ENCODE measurements at regions of chr3 and their contacts with region 1.

Region 1: DNA sequence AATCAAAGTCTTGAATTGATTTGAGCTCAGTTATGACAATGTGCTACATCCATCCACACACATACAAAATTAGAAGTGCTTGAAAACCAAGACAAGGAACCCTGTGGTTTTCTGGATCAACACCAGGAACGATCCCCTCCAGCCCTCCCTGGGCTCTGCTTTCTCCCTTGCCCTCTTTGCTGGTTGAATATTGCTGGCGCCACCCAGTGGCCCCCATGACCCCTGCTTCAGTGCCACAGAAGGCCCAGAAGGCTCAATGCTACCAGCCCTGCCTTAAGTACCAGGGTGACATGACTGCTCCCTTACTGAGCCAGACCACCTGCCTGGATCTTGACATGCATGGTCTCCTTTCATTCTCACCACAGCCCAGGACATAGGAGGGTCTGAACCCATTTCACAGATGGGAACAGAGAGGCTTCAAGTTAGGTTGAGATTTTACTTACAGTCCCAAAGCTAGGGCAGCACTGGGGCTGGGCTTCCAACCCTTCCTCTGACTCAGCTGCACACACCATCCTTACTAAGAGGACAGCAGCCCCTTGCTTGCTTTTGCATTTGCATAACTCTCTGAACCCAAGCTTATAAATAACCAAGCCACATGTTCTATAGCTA is 15.0 kb downstream of the IL12A start:
- DNase-seq: peak; percentile 48
- ATAC-seq: peak; percentile 93
- H3K4me3 ChIP-seq: no peak overlapping the region
- H3K27ac ChIP-seq: no peak overlapping the region
- H3K4me1 ChIP-seq: peaks cover 0 to 3% of the 10 kb centered on the region in 2 experiments; a peak in 2 of 4 replicates
- H3K27me3 ChIP-seq: no peaks in the 10 kb centered on the region
- CTCF ChIP-seq: peak; percentile 68 to 76 (median 73); a peak in 5 of 6 replicates
- POLR2A ChIP-seq: no peak
- RAD21 ChIP-seq: peak; percentile 78

Region 2: DNA sequence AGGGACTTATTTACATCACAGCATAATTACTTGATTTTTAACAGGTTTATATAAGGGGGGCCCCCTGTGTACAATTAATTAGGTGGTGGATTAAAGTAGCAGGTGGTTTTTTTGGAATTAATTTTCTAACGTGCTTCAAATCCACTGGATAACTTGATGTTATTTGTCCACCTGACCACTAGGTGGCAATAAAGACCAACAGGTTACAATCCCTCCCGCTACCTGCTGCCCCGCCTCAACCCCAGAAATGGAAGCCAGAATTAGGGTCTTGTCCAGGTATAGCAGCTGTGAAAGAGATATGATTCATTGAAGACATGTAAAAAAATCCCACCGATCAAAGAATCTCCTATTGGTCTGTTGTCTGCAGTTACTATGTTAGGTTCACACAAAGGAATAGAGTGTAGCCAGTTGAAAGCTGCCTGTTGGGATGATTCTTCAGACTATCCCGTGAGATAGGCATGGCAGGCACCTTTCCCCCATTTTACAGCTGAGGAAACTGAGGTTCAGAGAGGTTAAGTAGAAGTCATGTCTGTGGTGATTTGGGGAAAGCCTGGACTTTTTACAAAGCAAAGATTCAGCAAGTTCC is 1157.8 kb before region 1 on chr3:
- CTCF ChIA-PET with region 1: no interaction called
- POLR2A ChIA-PET with region 1: no interaction called
- RAD21 ChIA-PET with region 1: no interaction called
- intact Hi-C with region 1: loop called (anchors 10 kb)
- DNase-seq: peak; percentile 27
- ATAC-seq: peak; percentile 85
- H3K4me3 ChIP-seq: no peak overlapping the region
- H3K27ac ChIP-seq: no peak overlapping the region
- H3K4me1 ChIP-seq: no peaks in the 10 kb centered on the region
- H3K27me3 ChIP-seq: no peaks in the 10 kb centered on the region
- CTCF ChIP-seq: peak; percentile 58 to 77 (median 68); a peak in 4 of 6 replicates
- POLR2A ChIP-seq: no peak
- RAD21 ChIP-seq: peak; percentile 87

Region 3: GRCh38 chr3:159322322-159322939 is 681.2 kb before region 1 on chr3:
- CTCF ChIA-PET with region 1: interaction called, 4 read pairs
- POLR2A ChIA-PET with region 1: no interaction called
- RAD21 ChIA-PET with region 1: no interaction called
- intact Hi-C with region 1: loop called (anchors 10 kb)
- DNase-seq: peak; percentile 41
- ATAC-seq: peak; percentile 99
- H3K4me3 ChIP-seq: no peak overlapping the region
- H3K27ac ChIP-seq: no peak overlapping the region
- H3K4me1 ChIP-seq: no peaks in the 10 kb centered on the region; a peak in 1 of 4 replicates
- H3K27me3 ChIP-seq: no peaks in the 10 kb centered on the region
- CTCF ChIP-seq: peak; percentile 65 to 98 (median 97); a peak in 5 of 6 replicates
- POLR2A ChIP-seq: no peak
- RAD21 ChIP-seq: peak; percentile 68

Region 4: DNA sequence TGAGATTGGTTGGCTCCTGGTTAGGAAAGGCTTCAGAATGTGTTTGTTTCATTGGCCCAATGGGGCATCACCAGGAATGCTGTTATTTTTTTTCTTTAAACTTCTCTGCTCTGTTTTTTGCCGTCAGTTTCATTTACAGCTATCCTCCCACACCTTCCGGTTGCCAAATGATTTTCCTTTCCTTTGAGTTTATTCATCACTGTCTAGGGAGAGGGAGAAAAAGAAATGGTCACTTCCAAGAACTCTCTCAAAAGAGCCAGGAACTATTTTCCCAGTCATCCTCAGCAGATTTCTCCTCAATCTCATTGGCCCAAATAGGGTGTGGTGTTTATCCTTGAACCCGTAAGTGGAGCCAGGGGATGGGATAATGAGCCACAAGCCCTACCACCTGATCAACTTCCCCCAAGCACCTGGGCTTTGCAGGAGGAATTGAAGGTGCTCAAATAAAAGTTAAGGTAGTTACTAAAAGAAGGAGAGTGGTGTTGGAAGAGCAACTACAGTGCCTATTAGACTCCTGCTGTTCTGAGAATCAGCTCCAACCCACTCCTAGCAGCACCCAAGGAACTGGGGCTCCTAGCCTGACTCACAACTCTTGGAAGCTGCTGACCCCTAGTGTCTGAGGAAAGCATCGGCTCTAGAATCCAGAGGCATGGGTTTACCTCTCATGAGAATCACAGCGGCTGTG is 198.8 kb before region 1 on chr3:
- CTCF ChIA-PET with region 1: interaction called, 10 read pairs
- POLR2A ChIA-PET with region 1: no interaction called
- RAD21 ChIA-PET with region 1: no interaction called
- intact Hi-C with region 1: no loop called
- DNase-seq: peak; percentile 60
- ATAC-seq: peak; percentile 99
- H3K4me3 ChIP-seq: no peak overlapping the region
- H3K27ac ChIP-seq: no peak overlapping the region
- H3K4me1 ChIP-seq: 0 out of 4 replicates have a peak, but pooled peaks cover 0 to 4% of the 10 kb centered on the region in 2 experiments
- H3K27me3 ChIP-seq: no peaks in the 10 kb centered on the region
- CTCF ChIP-seq: peak; percentile 89 to 94 (median 92)
- POLR2A ChIP-seq: no peak
- RAD21 ChIP-seq: peak; percentile 98

Region 5: GRCh38 chr3:159828542-159828943 is 175.1 kb before region 1 on chr3:
- CTCF ChIA-PET with region 1: interaction called, 30 read pairs
- POLR2A ChIA-PET with region 1: interaction called, 3 read pairs
- RAD21 ChIA-PET with region 1: no interaction called
- intact Hi-C with region 1: loop called (anchors 1 kb)
- DNase-seq: peak; percentile 35
- ATAC-seq: peak; percentile 74
- H3K4me3 ChIP-seq: no peak overlapping the region
- H3K27ac ChIP-seq: no peak overlapping the region
- H3K4me1 ChIP-seq: peaks cover 30 to 39% of the 10 kb centered on the region in 2 experiments
- H3K27me3 ChIP-seq: no peaks in the 10 kb centered on the region
- CTCF ChIP-seq: peak; percentile 36 to 68 (median 55); a peak in 4 of 6 replicates
- POLR2A ChIP-seq: no peak
- RAD21 ChIP-seq: peak; percentile 70

Region 6: DNA sequence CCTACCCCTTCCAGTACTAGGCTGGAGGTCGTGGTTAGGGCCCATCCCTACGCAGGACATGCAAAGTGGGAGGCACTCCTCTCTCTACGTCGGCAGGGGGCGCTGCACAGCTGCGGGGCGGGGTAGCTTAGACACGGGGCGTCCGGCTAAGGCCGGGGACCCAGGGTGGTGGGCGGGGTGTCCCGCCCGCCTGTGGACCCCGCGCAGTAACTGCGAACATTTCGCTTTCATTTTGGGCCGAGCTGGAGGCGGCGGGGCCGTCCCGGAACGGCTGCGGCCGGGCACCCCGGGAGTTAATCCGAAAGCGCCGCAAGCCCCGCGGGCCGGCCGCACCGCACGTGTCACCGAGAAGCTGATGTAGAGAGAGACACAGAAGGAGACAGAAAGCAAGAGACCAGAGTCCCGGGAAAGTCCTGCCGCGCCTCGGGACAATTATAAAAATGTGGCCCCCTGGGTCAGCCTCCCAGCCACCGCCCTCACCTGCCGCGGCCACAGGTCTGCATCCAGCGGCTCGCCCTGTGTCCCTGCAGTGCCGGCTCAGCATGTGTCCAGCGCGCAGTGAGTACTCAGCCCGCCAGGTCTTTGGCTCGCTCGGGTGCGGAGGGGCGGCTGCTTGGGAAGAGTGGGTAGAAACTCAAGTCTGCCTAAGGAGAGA is 14.9 kb before region 1 on chr3 and contains the start of gene IL12A:
- CTCF ChIA-PET with region 1: interaction called, 63 read pairs
- POLR2A ChIA-PET with region 1: interaction called, 3 read pairs
- RAD21 ChIA-PET with region 1: interaction called, 4 to 6 read pairs
- intact Hi-C with region 1: no loop called
- DNase-seq: peak; percentile 52
- ATAC-seq: peak; percentile 95
- H3K4me3 ChIP-seq: peak within 1 kb of the TSS; percentile 69 to 73
- H3K27ac ChIP-seq: no peak within 1 kb of the TSS; the same call in 1 of the 2 replicates
- H3K4me1 ChIP-seq: peaks cover 4 to 24% of the 10 kb centered on the region in 2 experiments; a peak in 3 of 4 replicates
- H3K27me3 ChIP-seq: no peaks in the 10 kb centered on the region
- CTCF ChIP-seq: peak; percentile 74 to 95 (median 93); a peak in 5 of 6 replicates
- POLR2A ChIP-seq: no peak
- RAD21 ChIP-seq: peak; percentile 56
- total RNA-seq, gene IL12A: 2.8 TPM